ENCODE measurements at regions of chr12 and their contacts with region 1.

Region 1: GRCh38 chr12:27821259-27821973 is 41.4 kb upstream of the MANSC4 start:
- DNase-seq: peak in 7 of 9 experiments; percentile 3 to 70 (median 25)
- ATAC-seq: no peak
- H3K4me3 ChIP-seq: peak overlapping the region in 1 of 2 experiments; percentile 26
- H3K4me3 Mint-ChIP-seq: peak overlapping the region; percentile 44
- H3K27ac ChIP-seq: peak overlapping the region in 1 of 2 experiments; percentile 36
- H3K27ac Mint-ChIP-seq: peak overlapping the region; percentile 82
- H3K4me1 ChIP-seq: no peaks in the 10 kb centered on the region
- H3K4me1 Mint-ChIP-seq: peaks cover 13% of the 10 kb centered on the region
- H3K27me3 ChIP-seq: no peaks in the 10 kb centered on the region
- H3K27me3 Mint-ChIP-seq: no peaks in the 10 kb centered on the region
- CTCF ChIP-seq: peak; percentile 72

Region 2: GRCh38 chr12:27332407-27333301 is 488.8 kb before region 1 on chr12 and contains the start of gene BMAL2:
- CTCF ChIA-PET with region 1: no interaction called
- POLR2A ChIA-PET with region 1: no interaction called
- intact Hi-C with region 1: no loop called
- DNase-seq: peak in 6 of 9 experiments; percentile 4 to 56 (median 30)
- ATAC-seq: peak; percentile 61
- H3K4me3 ChIP-seq: peak within 1 kb of the TSS; percentile 46 to 48
- H3K4me3 Mint-ChIP-seq: peak within 1 kb of the TSS; percentile 86
- H3K27ac ChIP-seq: no peak within 1 kb of the TSS
- H3K27ac Mint-ChIP-seq: no peak within 1 kb of the TSS
- H3K4me1 ChIP-seq: peaks cover 11% of the 10 kb centered on the region
- H3K4me1 Mint-ChIP-seq: peaks cover 14% of the 10 kb centered on the region
- H3K27me3 ChIP-seq: peaks cover 5 to 12% of the 10 kb centered on the region in 2 experiments
- H3K27me3 Mint-ChIP-seq: peaks cover 35% of the 10 kb centered on the region
- CTCF ChIP-seq: no peak
- total RNA-seq, gene BMAL2: not detected

Region 3: GRCh38 chr12:27549801-27550652 is 271.4 kb before region 1 on chr12:
- CTCF ChIA-PET with region 1: no interaction called
- POLR2A ChIA-PET with region 1: no interaction called
- intact Hi-C with region 1: no loop called
- DNase-seq: peak in 1 of 9 experiments; percentile 17
- ATAC-seq: no peak
- H3K4me3 ChIP-seq: no peak overlapping the region
- H3K4me3 Mint-ChIP-seq: no peak overlapping the region
- H3K27ac ChIP-seq: no peak overlapping the region
- H3K27ac Mint-ChIP-seq: no peak overlapping the region
- H3K4me1 ChIP-seq: no peaks in the 10 kb centered on the region
- H3K4me1 Mint-ChIP-seq: no peaks in the 10 kb centered on the region
- H3K27me3 ChIP-seq: no peaks in the 10 kb centered on the region
- H3K27me3 Mint-ChIP-seq: no peaks in the 10 kb centered on the region
- CTCF ChIP-seq: no peak

Region 4: GRCh38 chr12:27779920-27780611 is 41.4 kb before region 1 on chr12 and contains the starts of genes KLHL42 and MANSC4:
- CTCF ChIA-PET with region 1: interaction called, 5 read pairs
- POLR2A ChIA-PET with region 1: interaction called, 6 read pairs
- intact Hi-C with region 1: loop called in 1 of 2 experiments (anchors 2 kb)
- DNase-seq: peak; percentile 27 to 81 (median 68)
- ATAC-seq: peak; percentile 84
- H3K4me3 ChIP-seq: peak within 1 kb of the TSS; percentile 69 to 73
- H3K4me3 Mint-ChIP-seq: peak within 1 kb of the TSS; percentile 88
- H3K27ac ChIP-seq: peak within 1 kb of the TSS; percentile 46 to 53
- H3K27ac Mint-ChIP-seq: peak within 1 kb of the TSS; percentile 91
- H3K4me1 ChIP-seq: peaks cover 15% of the 10 kb centered on the region
- H3K4me1 Mint-ChIP-seq: peaks cover 42% of the 10 kb centered on the region
- H3K27me3 ChIP-seq: no peaks in the 10 kb centered on the region
- H3K27me3 Mint-ChIP-seq: no peaks in the 10 kb centered on the region
- CTCF ChIP-seq: no peak
- total RNA-seq, gene KLHL42: 11.0 to 11.1 TPM
- total RNA-seq, gene MANSC4: not detected

Region 5: GRCh38 chr12:27807063-27807703 is 14.2 kb before region 1 on chr12:
- CTCF ChIA-PET with region 1: interaction called, 19 read pairs
- POLR2A ChIA-PET with region 1: no interaction called
- intact Hi-C with region 1: no loop called
- DNase-seq: peak in 8 of 9 experiments; percentile 3 to 58 (median 18)
- ATAC-seq: peak; percentile 74
- H3K4me3 ChIP-seq: peak overlapping the region in 1 of 2 experiments; percentile 5
- H3K4me3 Mint-ChIP-seq: peak overlapping the region; percentile 72
- H3K27ac ChIP-seq: peak overlapping the region in 1 of 2 experiments; percentile 9
- H3K27ac Mint-ChIP-seq: peak overlapping the region; percentile 91
- H3K4me1 ChIP-seq: peaks cover 7% of the 10 kb centered on the region
- H3K4me1 Mint-ChIP-seq: peaks cover 38% of the 10 kb centered on the region
- H3K27me3 ChIP-seq: no peaks in the 10 kb centered on the region
- H3K27me3 Mint-ChIP-seq: peaks cover 4% of the 10 kb centered on the region
- CTCF ChIP-seq: no peak

Region 6: DNA sequence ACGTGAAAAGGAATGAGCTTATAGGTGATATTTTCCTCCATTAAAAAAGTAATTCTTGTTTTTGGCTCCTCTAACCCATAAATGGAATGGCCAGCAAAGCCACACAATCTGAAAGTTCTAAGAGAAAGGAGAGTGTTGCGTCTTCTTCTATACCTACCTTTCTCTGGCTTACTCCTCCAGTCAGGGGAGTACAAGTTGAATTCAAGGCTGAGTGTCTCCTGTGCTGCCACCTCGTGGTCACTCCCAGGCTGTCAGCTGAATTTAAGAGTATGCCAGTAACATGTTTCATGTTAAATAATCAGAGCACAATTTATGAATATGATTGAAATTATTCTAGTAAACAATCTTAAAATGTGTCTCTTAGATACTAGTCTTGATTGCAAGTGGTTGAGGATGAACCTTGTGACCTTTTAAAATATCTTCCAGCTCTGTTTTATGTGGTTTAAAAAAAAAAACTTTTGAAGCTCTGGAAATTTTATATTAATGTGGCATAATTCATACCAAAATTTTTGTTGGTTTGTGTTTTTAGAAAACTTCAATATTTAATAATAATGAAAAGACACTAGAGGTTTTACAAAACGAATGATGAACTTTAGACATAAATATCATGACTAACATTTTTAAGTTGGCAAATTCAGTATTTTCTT is 119.5 kb after region 1 on chr12:
- CTCF ChIA-PET with region 1: interaction called, 21 read pairs
- POLR2A ChIA-PET with region 1: no interaction called
- intact Hi-C with region 1: loop called in 1 of 2 experiments (anchors 5 kb)
- DNase-seq: peak; percentile 35 to 74 (median 62)
- ATAC-seq: peak; percentile 68
- H3K4me3 ChIP-seq: no peak overlapping the region
- H3K4me3 Mint-ChIP-seq: no peak overlapping the region
- H3K27ac ChIP-seq: no peak overlapping the region
- H3K27ac Mint-ChIP-seq: no peak overlapping the region
- H3K4me1 ChIP-seq: no peaks in the 10 kb centered on the region
- H3K4me1 Mint-ChIP-seq: no peaks in the 10 kb centered on the region
- H3K27me3 ChIP-seq: no peaks in the 10 kb centered on the region
- H3K27me3 Mint-ChIP-seq: peaks cover 14% of the 10 kb centered on the region
- CTCF ChIP-seq: peak; percentile 78

Measured in CD8-positive, alpha-beta T cell (primary cell).